ENCODE measurements at regions of chr1 and their contacts with region 1.

Region 1: DNA sequence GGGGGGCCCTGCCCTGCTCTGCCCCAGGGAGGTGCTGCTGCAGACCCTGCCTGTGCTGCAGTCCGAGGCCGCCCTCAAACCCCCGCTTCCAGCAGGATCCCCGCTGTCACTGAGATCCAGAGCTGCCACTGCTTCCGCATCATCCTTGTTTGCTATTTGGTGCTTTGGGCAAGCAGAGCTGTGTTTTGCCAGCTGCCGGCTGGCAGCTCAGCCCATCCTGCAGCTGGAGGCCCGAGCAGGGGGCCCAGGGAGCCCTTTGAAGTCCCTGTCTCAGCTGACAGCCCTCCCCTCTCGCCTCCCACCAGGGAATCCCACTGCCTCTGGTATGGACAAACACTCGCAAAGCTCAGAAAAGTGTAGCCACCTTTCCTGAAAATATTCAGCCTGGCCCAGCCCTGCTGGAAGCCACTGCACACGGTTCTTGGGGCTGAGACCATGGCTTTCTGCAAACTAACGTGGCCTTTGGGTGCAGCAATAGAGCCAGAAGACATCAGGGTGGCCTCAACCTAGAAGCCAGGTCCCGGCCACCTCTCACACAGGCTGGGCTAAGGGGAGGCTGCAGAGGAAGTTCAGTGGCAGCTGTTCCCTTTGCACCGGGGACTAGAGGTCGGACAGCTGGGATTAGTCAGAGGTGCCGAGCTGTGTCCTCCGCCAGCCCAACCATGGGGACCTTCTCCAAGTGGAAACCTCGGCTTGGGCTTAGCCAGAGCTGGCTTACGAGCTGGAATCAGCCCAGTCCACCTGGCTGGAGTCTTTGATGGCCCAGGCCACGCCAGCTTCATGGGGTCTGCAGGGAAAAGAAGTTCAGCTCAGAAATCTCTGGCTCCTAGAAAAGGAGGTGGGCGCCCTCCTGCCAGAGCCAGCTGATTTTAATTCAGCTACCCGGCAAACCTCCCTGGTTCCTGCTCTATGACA is 107.1 kb downstream of the SPSB1 start:
- DNase-seq: peak; percentile 83
- H3K4me3 ChIP-seq: no peak overlapping the region
- H3K27ac ChIP-seq: peak overlapping the region; percentile 98
- H3K4me1 ChIP-seq: peaks cover 59% of the 10 kb centered on the region
- H3K27me3 ChIP-seq: no peaks in the 10 kb centered on the region
- CTCF ChIP-seq: no peak
- POLR2A ChIP-seq: no peak

Region 2: DNA sequence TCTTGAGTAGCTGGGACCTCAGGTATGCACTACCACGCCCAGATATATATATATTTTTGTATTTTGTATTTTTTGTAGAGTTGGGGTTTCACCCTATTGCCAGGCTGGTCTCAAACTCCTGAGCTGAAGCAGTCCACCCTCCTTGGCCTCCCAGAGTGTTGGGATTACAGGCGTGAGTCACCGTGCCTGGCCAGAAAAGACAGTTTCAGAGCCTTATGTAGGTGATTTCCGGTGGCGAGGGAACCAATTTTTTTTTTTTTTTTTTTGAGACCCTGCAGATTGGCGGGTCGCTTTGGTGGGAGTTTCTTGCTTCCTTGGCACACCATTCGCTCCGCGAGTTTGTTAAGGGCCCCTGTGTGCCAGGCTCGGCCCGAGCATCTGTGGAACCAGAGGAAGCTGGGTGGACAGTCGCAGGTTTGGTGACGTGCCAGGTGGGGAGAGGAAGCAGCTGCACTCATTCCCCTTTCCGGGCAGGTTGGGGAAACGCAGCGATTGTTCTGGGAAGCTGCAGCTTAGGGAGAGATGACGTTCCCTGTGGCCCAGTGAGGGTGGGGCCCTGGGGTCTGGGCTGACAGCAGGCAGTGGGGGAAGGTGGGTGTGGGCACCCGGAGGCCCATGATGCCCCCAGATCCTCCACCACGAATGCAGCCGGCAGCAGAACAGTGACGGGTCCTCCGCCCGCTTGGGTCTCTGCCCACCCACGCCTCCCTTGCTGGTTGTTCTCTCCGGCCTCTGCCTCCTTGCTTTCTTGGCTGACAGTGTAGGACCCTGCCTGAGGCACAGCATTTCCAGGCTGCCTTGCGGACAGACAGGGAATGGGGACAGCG is 82.0 kb before region 1 on chr1:
- CTCF ChIA-PET with region 1: interaction called, 5 read pairs
- POLR2A ChIA-PET with region 1: no interaction called
- dilution Hi-C with region 1: no loop called
- intact Hi-C with region 1: loop called (anchors 1 kb)
- DNase-seq: peak; percentile 83
- H3K4me3 ChIP-seq: no peak overlapping the region
- H3K27ac ChIP-seq: peak overlapping the region; percentile 79
- H3K4me1 ChIP-seq: peaks cover 18% of the 10 kb centered on the region
- H3K27me3 ChIP-seq: no peaks in the 10 kb centered on the region
- CTCF ChIP-seq: no peak
- POLR2A ChIP-seq: no peak

Region 3: GRCh38 chr1:9371391-9371935 is 28.3 kb before region 1 on chr1:
- CTCF ChIA-PET with region 1: interaction called, 37 read pairs
- POLR2A ChIA-PET with region 1: interaction called, 3 read pairs
- dilution Hi-C with region 1: no loop called
- intact Hi-C with region 1: loop called (anchors 1 kb)
- DNase-seq: peak; percentile 95
- H3K4me3 ChIP-seq: no peak overlapping the region
- H3K27ac ChIP-seq: peak overlapping the region; percentile 48
- H3K4me1 ChIP-seq: peaks cover 31% of the 10 kb centered on the region
- H3K27me3 ChIP-seq: no peaks in the 10 kb centered on the region
- CTCF ChIP-seq: no peak
- POLR2A ChIP-seq: no peak

Region 4: DNA sequence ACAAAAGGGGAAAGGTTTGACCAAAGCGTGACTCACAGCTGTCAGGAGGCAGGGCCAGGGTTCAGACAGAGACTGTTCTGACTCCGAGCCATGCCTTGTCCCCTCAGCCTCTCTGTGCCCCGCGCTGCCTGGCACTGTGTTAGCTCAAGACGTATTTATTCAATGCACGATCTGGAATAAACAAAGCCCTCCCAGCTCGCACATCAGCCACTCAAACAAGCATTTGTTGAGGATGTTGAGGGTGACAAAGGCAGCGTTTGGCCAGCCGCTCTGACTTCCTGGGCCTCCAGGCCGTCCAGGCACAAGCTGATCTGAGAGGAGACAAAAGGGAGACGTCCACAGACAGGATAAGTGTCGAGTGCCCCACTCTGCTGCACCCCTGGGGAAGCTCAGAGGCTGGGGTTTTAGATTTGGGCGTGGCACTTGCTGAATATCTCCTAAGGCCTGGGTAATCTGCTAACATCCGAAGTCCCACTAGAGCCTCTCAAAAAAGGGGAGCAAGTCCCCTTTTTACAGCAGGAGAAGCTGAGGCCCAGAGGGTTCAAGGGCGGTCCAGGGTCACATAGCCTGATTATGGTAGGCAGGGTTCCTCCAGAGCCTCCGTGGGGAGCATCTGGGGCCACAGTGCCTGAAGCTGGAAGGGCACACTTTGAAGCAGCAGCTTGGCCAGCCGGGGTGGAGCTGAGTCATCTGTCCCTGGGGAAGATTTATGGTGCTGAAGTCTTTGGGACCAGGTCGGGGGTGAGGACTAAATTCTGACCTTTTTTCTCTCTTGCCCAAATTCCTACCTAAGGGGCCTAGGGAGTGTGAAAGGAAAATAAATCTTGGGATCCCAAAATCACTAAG is 11.2 kb before region 1 on chr1:
- CTCF ChIA-PET with region 1: interaction called, 19 read pairs
- POLR2A ChIA-PET with region 1: interaction called, 6 read pairs
- dilution Hi-C with region 1: no loop called
- intact Hi-C with region 1: loop called (anchors 1 kb)
- DNase-seq: no peak
- H3K4me3 ChIP-seq: no peak overlapping the region
- H3K27ac ChIP-seq: no peak overlapping the region
- H3K4me1 ChIP-seq: peaks cover 8% of the 10 kb centered on the region
- H3K27me3 ChIP-seq: no peaks in the 10 kb centered on the region
- CTCF ChIP-seq: no peak
- POLR2A ChIP-seq: no peak

Region 5: DNA sequence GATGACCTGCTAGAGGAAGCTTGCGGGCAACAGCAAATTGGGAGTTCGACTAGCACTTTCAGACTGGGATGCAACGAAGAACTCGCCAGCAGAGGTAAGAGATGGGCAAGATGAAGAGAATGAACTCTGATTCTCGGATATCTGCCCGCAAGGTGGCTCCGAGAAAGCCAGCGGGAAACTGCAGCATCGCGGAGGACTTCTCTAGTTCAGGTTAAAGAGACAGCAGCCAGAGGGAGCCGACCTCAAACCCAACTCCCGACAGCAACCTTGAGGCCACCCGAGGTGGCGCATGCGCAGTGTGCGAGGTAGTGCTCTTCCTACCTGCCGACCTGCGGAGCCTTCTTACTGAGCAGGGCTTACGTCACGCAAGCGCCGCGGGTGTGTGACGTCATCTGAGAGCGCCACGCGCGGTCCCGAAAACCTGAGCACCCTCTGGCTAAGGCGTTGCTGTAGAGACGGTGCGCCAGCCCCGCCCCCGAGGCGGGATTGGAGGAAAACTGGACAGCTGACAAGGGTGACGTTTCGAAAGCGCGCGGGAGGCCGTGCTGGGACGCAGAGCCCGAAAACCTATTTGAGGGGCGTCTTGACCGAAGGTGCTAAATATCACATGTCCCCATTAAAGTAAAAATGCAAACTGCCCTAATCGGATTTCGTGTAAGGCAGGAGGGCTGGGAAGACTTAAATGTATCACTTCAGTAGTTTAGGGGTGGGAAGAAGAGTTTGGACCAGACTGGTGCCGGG is 29.0 kb after region 1 on chr1:
- CTCF ChIA-PET with region 1: interaction called, 4 read pairs
- POLR2A ChIA-PET with region 1: no interaction called
- dilution Hi-C with region 1: no loop called
- intact Hi-C with region 1: loop called (anchors 1 kb)
- DNase-seq: peak; percentile 100
- H3K4me3 ChIP-seq: peak overlapping the region; percentile 10 to 61 (median 59)
- H3K27ac ChIP-seq: peak overlapping the region; percentile 62
- H3K4me1 ChIP-seq: peaks cover 10% of the 10 kb centered on the region
- H3K27me3 ChIP-seq: no peaks in the 10 kb centered on the region
- CTCF ChIP-seq: peak in 1 of 2 donors; percentile 13
- POLR2A ChIP-seq: peak; percentile 80

Region 6: DNA sequence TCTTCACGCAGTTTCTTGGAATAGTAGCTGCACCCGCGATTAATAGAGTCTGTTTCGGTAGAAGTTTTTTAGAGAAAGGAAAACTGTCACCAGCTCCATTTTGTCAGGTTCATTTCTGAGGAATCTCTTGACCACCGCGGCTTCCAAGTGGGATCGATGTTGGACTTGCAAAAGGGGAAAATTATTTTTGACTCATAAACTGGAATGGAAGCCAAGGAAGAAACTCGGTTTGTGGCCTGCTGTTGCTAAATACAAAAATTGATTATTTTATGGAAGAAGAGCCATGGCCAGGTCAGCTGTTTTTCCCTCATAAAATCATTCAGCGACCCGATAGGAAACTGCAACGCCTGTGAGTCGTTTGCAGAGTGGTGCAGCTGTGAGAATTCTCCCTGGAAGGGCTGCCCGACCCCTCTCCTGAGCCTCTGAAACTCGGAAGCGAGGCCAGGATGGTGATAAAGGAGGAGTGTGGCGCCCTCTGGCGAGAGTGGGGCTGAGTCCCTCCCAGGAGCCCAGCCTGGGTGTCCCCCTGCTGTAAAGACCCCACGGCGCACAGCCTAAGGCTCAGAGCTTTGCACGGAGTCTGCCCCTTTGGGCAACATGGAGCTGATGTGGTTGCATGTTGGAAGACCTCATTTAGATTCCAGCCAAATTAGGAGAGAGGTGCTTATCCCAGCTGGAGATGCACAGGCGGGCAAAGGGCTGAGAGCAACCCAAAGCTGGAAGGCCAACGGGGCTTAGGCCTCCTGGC is 55.9 kb after region 1 on chr1:
- CTCF ChIA-PET with region 1: interaction called, 49 read pairs
- POLR2A ChIA-PET with region 1: no interaction called
- dilution Hi-C with region 1: no loop called
- intact Hi-C with region 1: loop called (anchors 1 kb)
- DNase-seq: peak; percentile 79
- H3K4me3 ChIP-seq: no peak overlapping the region
- H3K27ac ChIP-seq: no peak overlapping the region
- H3K4me1 ChIP-seq: no peaks in the 10 kb centered on the region
- H3K27me3 ChIP-seq: peaks cover 0 to 4% of the 10 kb centered on the region in 2 experiments
- CTCF ChIP-seq: peak; percentile 85 to 91
- POLR2A ChIP-seq: no peak

Region 7: GRCh38 chr1:10117865-10118264 is 718.1 kb after region 1 on chr1:
- CTCF ChIA-PET with region 1: no interaction called
- POLR2A ChIA-PET with region 1: no interaction called
- dilution Hi-C with region 1: no loop called
- intact Hi-C with region 1: no loop called
- DNase-seq: no peak
- H3K4me3 ChIP-seq: no peak overlapping the region
- H3K27ac ChIP-seq: no peak overlapping the region
- H3K4me1 ChIP-seq: no peaks in the 10 kb centered on the region
- H3K27me3 ChIP-seq: no peaks in the 10 kb centered on the region
- CTCF ChIP-seq: no peak
- POLR2A ChIP-seq: no peak